CD4-positive, alpha-beta memory T cell (primary cell): ENCODE measurements at regions of chr2 and their contacts with region 1.

Region 1: DNA sequence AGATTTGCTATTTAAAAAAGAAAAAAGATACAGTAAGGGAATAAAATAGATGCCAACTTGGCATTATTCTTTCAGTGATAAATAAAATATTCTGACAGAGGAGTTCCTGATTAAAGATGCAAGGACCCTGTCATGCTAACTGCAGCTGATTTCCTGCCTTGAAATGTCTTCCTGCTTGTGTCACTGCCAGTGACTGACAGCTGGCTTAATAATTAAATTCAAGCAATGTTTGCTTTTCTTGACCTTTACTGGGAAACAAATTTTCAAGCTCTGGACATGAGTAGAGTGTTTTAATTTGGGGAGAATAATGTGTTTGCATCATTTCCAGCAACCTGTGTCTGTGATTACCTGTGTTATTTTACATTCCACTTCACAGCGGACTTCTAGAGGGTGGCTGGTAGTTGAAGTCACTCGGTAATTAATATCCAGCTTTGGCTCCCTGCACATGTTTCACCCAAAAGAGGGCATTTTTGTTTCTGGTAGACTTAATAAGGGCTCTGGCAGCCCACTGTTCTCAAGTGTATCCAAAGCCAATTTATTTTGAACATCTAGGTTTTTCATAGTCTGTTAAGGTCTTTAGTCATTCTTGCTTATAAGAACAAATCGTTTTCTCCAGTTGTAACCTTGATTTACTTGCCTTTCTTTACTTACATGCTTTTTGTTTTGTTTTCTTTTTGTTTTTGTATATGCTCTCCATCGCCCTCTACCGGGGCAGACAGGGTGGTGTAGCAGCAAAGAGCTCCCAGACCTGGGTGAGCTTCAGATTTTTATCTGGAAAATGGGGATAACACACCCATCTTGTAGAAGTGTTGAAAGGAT is 48.5 kb upstream of the PROKR1 start:
- DNase-seq: peak; percentile 46 to 56 (median 51)
- H3K4me3 ChIP-seq: no peak overlapping the region
- H3K4me3 Mint-ChIP-seq: peak overlapping the region in 7 of 8 donors; percentile 1 to 70 (median 35)
- H3K27ac ChIP-seq: no peak overlapping the region
- H3K27ac Mint-ChIP-seq: peak overlapping the region in 3 of 7 donors; percentile 10 to 49 (median 23)
- H3K4me1 ChIP-seq: peaks cover 7% of the 10 kb centered on the region
- H3K4me1 Mint-ChIP-seq: peaks cover 2 to 12% (median 7%) of the 10 kb centered on the region in 4 donors
- H3K27me3 ChIP-seq: no peaks in the 10 kb centered on the region
- H3K27me3 Mint-ChIP-seq: peaks cover 5 to 10% of the 10 kb centered on the region in 2 donors

Region 2: DNA sequence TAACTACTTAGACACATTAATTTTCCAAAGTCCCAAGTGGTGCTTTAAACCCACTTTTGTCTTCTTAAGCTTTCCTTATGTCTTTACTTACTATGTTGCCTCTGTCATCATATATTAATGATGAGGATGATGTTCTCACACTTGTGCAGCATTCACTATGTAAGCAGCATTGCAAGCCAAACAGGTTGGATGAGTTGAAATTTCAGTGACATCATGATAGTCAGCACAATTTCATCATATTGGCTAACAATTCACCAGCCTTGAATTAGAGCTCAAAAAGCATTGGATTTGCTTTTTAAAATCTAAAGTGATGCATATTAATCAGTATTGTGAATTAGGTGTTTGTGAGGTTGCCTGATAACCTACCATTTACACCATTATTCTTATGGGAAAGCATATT is 119.8 kb before region 1 on chr2:
- CTCF ChIA-PET with region 1: interaction called, 149 read pairs
- POLR2A ChIA-PET with region 1: no interaction called
- intact Hi-C with region 1: no loop called
- DNase-seq: no peak
- H3K4me3 ChIP-seq: no peak overlapping the region
- H3K4me3 Mint-ChIP-seq: no peak overlapping the region
- H3K27ac ChIP-seq: no peak overlapping the region
- H3K27ac Mint-ChIP-seq: no peak overlapping the region
- H3K4me1 ChIP-seq: no peaks in the 10 kb centered on the region
- H3K4me1 Mint-ChIP-seq: peaks cover 0 to 2% (median 0%) of the 10 kb centered on the region in 4 donors
- H3K27me3 ChIP-seq: no peaks in the 10 kb centered on the region
- H3K27me3 Mint-ChIP-seq: no peaks in the 10 kb centered on the region

Region 3: DNA sequence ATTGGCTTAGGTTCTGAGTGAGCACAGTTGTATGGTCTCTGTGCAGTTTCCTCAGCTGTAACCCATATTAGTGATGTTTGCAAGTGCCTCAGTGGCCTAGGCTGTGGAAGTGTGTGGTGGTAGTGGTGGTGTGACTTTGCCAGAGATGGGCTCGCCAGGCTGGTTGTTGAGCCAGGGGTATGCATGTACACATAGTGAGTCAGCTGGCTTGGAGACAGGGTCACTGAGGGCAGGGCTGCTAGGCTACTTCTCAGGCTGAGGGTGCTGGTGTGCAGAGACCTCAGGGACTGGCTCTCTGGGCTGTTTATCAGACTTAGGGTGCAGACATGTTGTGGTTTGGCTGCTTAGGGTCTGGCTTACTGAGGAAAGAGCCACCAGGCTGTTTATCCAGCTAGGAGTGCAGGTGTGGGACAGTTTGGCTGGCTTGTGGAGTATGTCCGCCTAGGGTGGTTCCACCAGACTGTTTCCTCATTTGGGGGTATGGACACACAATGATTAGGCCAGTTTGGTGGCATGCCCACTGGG is 112.5 kb before region 1 on chr2:
- CTCF ChIA-PET with region 1: interaction called, 117 read pairs
- POLR2A ChIA-PET with region 1: interaction called, 10 read pairs
- intact Hi-C with region 1: loop called (anchors 1 kb)
- DNase-seq: no peak
- H3K4me3 ChIP-seq: no peak overlapping the region
- H3K4me3 Mint-ChIP-seq: no peak overlapping the region
- H3K27ac ChIP-seq: no peak overlapping the region
- H3K27ac Mint-ChIP-seq: peak overlapping the region in 1 of 7 donors; percentile 53
- H3K4me1 ChIP-seq: no peaks in the 10 kb centered on the region
- H3K4me1 Mint-ChIP-seq: peaks cover 0 to 3% (median 0%) of the 10 kb centered on the region in 4 donors
- H3K27me3 ChIP-seq: no peaks in the 10 kb centered on the region
- H3K27me3 Mint-ChIP-seq: no peaks in the 10 kb centered on the region

Region 4: DNA sequence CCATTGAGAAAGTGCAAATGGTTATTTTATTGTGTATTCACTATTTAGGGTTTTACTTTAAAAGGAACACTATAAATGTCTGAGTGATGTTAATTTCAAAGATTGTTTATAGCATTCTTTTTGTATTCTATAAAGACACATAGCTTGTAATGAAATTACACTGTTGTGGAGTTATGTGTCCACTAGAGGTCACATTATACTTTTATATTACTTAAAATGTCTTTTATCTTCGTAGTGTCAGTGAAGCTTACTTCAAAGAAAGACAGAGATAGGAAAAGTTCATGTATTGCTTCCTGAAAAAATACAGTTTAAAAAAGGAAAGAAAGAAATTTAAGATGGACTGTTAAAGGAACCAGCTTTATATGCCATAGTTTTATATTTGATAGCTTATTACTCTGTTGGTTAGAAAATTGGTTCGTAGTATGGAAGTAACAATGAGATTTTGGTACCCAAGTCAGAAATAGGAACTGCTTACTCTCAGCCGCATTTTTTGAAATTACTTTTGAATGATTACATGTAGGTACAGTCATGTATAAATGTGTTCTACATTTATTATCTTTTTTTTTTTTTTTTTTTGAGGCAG is 107.0 kb before region 1 on chr2:
- CTCF ChIA-PET with region 1: interaction called, 117 read pairs
- POLR2A ChIA-PET with region 1: interaction called, 10 read pairs
- intact Hi-C with region 1: loop called (anchors 1 kb)
- DNase-seq: peak in 4 of 5 donors; percentile 24 to 39 (median 31)
- H3K4me3 ChIP-seq: no peak overlapping the region
- H3K4me3 Mint-ChIP-seq: peak overlapping the region in 1 of 8 donors; percentile 28
- H3K27ac ChIP-seq: no peak overlapping the region
- H3K27ac Mint-ChIP-seq: peak overlapping the region in 2 of 7 donors; percentile 35 to 38
- H3K4me1 ChIP-seq: no peaks in the 10 kb centered on the region
- H3K4me1 Mint-ChIP-seq: peaks cover 0 to 5% (median 1%) of the 10 kb centered on the region in 4 donors
- H3K27me3 ChIP-seq: no peaks in the 10 kb centered on the region
- H3K27me3 Mint-ChIP-seq: no peaks in the 10 kb centered on the region

Region 5: GRCh38 chr2:68506170-68506569 is 88.7 kb before region 1 on chr2:
- CTCF ChIA-PET with region 1: interaction called, 21 read pairs
- POLR2A ChIA-PET with region 1: interaction called, 5 read pairs
- intact Hi-C with region 1: no loop called
- DNase-seq: peak in 2 of 5 donors; percentile 13 to 22
- H3K4me3 ChIP-seq: peak overlapping the region in 1 of 2 donors; percentile 17
- H3K4me3 Mint-ChIP-seq: peak overlapping the region; percentile 4 to 80 (median 64)
- H3K27ac ChIP-seq: no peak overlapping the region
- H3K27ac Mint-ChIP-seq: peak overlapping the region; percentile 25 to 87 (median 74)
- H3K4me1 ChIP-seq: peaks cover 27% of the 10 kb centered on the region
- H3K4me1 Mint-ChIP-seq: peaks cover 17 to 27% (median 22%) of the 10 kb centered on the region in 4 donors
- H3K27me3 ChIP-seq: no peaks in the 10 kb centered on the region
- H3K27me3 Mint-ChIP-seq: no peaks in the 10 kb centered on the region

Region 6: DNA sequence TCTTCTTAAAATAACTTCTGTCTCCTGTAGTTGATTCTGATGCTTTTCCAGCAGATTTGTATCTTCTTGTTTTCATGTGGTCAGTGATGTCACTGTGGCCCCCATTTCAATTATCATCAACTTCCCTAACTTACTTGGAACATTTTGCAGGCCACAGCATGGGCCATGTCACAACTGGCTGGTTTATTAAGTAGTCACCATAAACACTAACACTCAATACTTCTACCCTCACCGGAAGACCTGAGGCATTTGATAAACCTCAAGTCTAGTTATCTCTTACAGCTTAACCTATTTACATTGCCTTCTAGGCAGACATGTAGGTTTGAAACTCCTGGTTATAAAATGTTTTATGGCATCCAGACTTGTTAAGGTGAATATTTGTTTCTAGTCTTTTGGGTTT is 11.1 kb after region 1 on chr2:
- CTCF ChIA-PET with region 1: interaction called, 18 read pairs
- POLR2A ChIA-PET with region 1: no interaction called
- intact Hi-C with region 1: no loop called
- DNase-seq: no peak
- H3K4me3 ChIP-seq: no peak overlapping the region
- H3K4me3 Mint-ChIP-seq: no peak overlapping the region
- H3K27ac ChIP-seq: no peak overlapping the region
- H3K27ac Mint-ChIP-seq: no peak overlapping the region
- H3K4me1 ChIP-seq: no peaks in the 10 kb centered on the region
- H3K4me1 Mint-ChIP-seq: no peaks in the 10 kb centered on the region
- H3K27me3 ChIP-seq: no peaks in the 10 kb centered on the region
- H3K27me3 Mint-ChIP-seq: peaks cover 1 to 3% of the 10 kb centered on the region in 2 donors

Region 7: DNA sequence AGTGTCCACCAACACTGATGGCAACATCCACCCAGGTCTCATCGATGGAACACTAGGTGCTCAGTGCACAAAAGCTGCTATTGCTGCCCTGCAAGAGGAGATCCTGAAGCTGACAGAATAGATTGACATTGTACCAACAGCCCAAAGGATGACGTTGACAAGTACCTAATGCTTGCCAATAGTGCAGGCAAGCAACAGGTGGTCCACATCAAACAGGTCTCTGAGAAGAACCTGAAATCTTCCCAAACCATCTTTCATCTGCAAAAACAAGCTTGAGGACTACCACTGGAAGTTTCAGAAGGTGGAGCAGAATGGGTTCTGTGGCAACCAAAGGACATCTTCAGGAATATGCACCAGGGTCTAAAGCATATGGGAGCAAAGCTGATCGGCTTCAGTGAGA is 32.7 kb after region 1 on chr2:
- CTCF ChIA-PET with region 1: no interaction called
- POLR2A ChIA-PET with region 1: no interaction called
- intact Hi-C with region 1: no loop called
- DNase-seq: no peak
- H3K4me3 ChIP-seq: no peak overlapping the region
- H3K4me3 Mint-ChIP-seq: no peak overlapping the region
- H3K27ac ChIP-seq: no peak overlapping the region
- H3K27ac Mint-ChIP-seq: no peak overlapping the region
- H3K4me1 ChIP-seq: no peaks in the 10 kb centered on the region
- H3K4me1 Mint-ChIP-seq: no peaks in the 10 kb centered on the region
- H3K27me3 ChIP-seq: no peaks in the 10 kb centered on the region
- H3K27me3 Mint-ChIP-seq: peaks cover 16 to 19% of the 10 kb centered on the region in 2 donors

Region 8: GRCh38 chr2:68994864-68995263 is 400.0 kb after region 1 on chr2:
- CTCF ChIA-PET with region 1: no interaction called
- POLR2A ChIA-PET with region 1: no interaction called
- intact Hi-C with region 1: no loop called
- DNase-seq: no peak
- H3K4me3 ChIP-seq: no peak overlapping the region
- H3K4me3 Mint-ChIP-seq: no peak overlapping the region
- H3K27ac ChIP-seq: no peak overlapping the region
- H3K27ac Mint-ChIP-seq: no peak overlapping the region
- H3K4me1 ChIP-seq: no peaks in the 10 kb centered on the region
- H3K4me1 Mint-ChIP-seq: no peaks in the 10 kb centered on the region
- H3K27me3 ChIP-seq: peaks cover 4% of the 10 kb centered on the region
- H3K27me3 Mint-ChIP-seq: peaks cover 15 to 24% of the 10 kb centered on the region in 2 donors